ENCODE measurements at regions of chr9 and their contacts with region 1.

Region 1: DNA sequence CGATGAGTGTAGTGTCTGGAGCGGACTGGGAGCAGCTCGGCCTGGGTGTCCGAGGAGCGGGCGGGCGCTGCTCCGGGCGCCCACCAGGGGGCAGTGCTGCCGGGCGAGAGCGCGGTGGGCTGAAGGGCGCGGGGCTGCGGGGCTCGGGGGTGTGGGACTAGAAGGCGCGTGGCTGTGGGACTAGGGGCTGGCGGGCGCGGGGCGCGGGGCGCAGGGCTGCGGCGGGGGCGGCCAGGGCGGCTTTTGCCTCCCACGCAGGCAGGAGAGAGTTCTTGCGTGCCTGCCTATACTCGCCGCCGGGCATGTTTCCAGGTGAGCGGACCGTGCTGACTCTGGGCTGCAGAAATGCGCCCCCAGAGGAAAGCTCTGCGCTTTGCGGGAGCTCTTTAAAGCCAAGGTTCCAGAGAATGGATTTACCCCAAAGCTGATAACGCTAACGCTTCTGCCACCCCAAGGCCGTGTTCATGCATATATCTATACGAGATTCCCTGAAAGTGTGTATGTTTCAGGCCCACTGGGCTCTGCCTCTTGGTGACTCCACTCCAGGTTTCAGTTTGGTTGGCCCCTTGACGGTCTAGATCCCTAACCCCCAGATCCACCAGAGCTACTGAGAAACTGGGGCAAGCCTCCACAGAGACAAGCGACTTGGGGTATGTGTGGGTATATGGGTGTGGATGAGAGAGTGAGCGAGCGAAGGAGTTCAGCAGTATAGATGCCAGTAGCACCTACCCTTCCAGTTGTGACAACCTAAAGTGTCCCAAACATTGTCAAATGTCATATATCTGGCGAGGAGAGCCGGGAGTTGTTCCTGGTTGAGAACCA is 56.2 kb downstream of the ACER2 start:
- DNase-seq: peak; percentile 82
- ATAC-seq: peak; percentile 92
- H3K4me3 Mint-ChIP-seq: peak overlapping the region; percentile 74
- H3K27ac Mint-ChIP-seq: no peak overlapping the region
- H3K4me1 Mint-ChIP-seq: peaks cover 3% of the 10 kb centered on the region
- H3K27me3 Mint-ChIP-seq: peaks cover 9% of the 10 kb centered on the region; the same call in 1 of the 2 replicates
- CTCF ChIP-seq: peak; percentile 89

Region 2: GRCh38 chr9:19127881-19128500 is 337.0 kb before region 1 on chr9:
- CTCF ChIA-PET with region 1: interaction called, 23 read pairs
- POLR2A ChIA-PET with region 1: no interaction called
- DNase-seq: peak; percentile 57
- ATAC-seq: peak; percentile 10
- H3K4me3 Mint-ChIP-seq: peak overlapping the region; percentile 77
- H3K27ac Mint-ChIP-seq: 0 out of 2 replicates have a peak overlapping the region, but pooled peaks have one; percentile 82
- H3K4me1 Mint-ChIP-seq: peaks cover 45% of the 10 kb centered on the region
- H3K27me3 Mint-ChIP-seq: 0 out of 2 replicates have a peak, but pooled peaks cover 3% of the 10 kb centered on the region
- CTCF ChIP-seq: no peak

Region 3: DNA sequence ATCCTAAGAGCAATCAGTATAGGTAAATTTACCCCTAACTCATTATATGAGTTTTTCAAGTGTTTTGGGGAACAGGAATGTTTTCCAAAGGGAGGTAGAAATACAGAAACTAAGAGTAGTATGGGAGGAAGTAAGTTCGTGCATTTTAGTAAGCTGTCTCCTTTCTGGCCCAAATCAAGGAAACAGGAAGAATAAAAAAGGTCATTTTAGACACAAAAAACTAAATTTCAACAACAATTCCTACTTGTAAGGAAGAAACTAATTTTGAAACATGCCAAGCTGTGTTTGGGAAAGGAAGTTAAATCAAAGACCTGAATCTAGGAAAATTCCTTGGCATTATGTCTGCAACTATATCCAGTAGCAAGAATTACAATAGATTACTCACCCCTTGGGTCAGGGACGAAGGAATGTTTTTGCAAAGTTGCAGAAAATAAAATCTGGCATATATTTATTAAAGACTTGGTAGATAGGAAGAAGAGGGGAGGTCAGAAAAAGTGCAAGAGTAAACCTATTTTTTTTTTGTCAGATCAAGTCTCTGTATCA is 78.4 kb before region 1 on chr9:
- CTCF ChIA-PET with region 1: interaction called, 10 read pairs
- POLR2A ChIA-PET with region 1: no interaction called
- DNase-seq: no peak
- ATAC-seq: no peak
- H3K4me3 Mint-ChIP-seq: no peak overlapping the region
- H3K27ac Mint-ChIP-seq: no peak overlapping the region
- H3K4me1 Mint-ChIP-seq: no peaks in the 10 kb centered on the region
- H3K27me3 Mint-ChIP-seq: no peaks in the 10 kb centered on the region; the same call in 1 of the 2 replicates
- CTCF ChIP-seq: no peak

Region 4: GRCh38 chr9:19431361-19432171 is 33.4 kb before region 1 on chr9:
- CTCF ChIA-PET with region 1: interaction called, 17 read pairs
- POLR2A ChIA-PET with region 1: no interaction called
- DNase-seq: no peak
- ATAC-seq: no peak
- H3K4me3 Mint-ChIP-seq: no peak overlapping the region
- H3K27ac Mint-ChIP-seq: no peak overlapping the region; the same call in 1 of the 2 replicates
- H3K4me1 Mint-ChIP-seq: peaks cover 7% of the 10 kb centered on the region
- H3K27me3 Mint-ChIP-seq: no peaks in the 10 kb centered on the region
- CTCF ChIP-seq: no peak

Region 5: GRCh38 chr9:19488721-19489120 is 23.7 kb after region 1 on chr9:
- CTCF ChIA-PET with region 1: interaction called, 43 read pairs
- POLR2A ChIA-PET with region 1: no interaction called
- DNase-seq: no peak
- ATAC-seq: no peak
- H3K4me3 Mint-ChIP-seq: no peak overlapping the region
- H3K27ac Mint-ChIP-seq: no peak overlapping the region
- H3K4me1 Mint-ChIP-seq: peaks cover 5% of the 10 kb centered on the region
- H3K27me3 Mint-ChIP-seq: no peaks in the 10 kb centered on the region; the same call in 1 of the 2 replicates
- CTCF ChIP-seq: no peak

Region 6: DNA sequence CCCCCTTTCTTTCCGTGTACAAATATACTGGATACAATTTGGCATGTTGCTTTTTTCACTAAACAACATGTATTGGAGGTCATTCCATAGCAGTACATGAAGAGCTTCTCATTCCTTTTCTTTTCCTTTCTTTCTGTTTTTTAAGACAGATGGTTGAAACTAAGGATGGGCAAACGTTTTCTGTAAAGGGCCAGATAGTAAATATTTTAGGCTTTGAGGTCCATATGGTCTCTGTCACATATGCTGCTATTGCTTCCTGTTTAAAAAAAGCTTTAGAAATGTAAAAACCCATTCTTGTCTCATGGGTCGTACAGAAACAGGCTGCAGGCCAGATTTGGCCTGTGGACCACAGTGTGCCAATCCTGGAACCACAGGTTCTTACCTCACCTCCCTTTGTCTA is 104.0 kb after region 1 on chr9:
- CTCF ChIA-PET with region 1: interaction called, 10 read pairs
- POLR2A ChIA-PET with region 1: no interaction called
- DNase-seq: no peak
- ATAC-seq: no peak
- H3K4me3 Mint-ChIP-seq: no peak overlapping the region
- H3K27ac Mint-ChIP-seq: no peak overlapping the region
- H3K4me1 Mint-ChIP-seq: peaks cover 20% of the 10 kb centered on the region
- H3K27me3 Mint-ChIP-seq: no peaks in the 10 kb centered on the region
- CTCF ChIP-seq: no peak

Region 7: GRCh38 chr9:19665146-19665863 is 200.3 kb after region 1 on chr9:
- CTCF ChIA-PET with region 1: no interaction called
- POLR2A ChIA-PET with region 1: no interaction called
- DNase-seq: no peak
- ATAC-seq: no peak
- H3K4me3 Mint-ChIP-seq: no peak overlapping the region
- H3K27ac Mint-ChIP-seq: peak overlapping the region; percentile 24
- H3K4me1 Mint-ChIP-seq: peaks cover 8% of the 10 kb centered on the region
- H3K27me3 Mint-ChIP-seq: no peaks in the 10 kb centered on the region
- CTCF ChIP-seq: no peak

Measured in WTC11 (cell line).